Ovary (tissue), 10 donors: ENCODE measurements at regions of chr1 and their contacts with region 1.

Region 1: GRCh38 chr1:161305867-161306519 is 3.8 kb downstream of the MPZ start:
- DNase-seq: peak; percentile 74 to 85 (median 80)
- H3K4me3 ChIP-seq: peak overlapping the region; percentile 74
- H3K27ac ChIP-seq: no peak overlapping the region
- H3K4me1 ChIP-seq: peaks cover 8% of the 10 kb centered on the region
- H3K27me3 ChIP-seq: no peaks in the 10 kb centered on the region
- CTCF ChIP-seq: no peak
- EP300 ChIP-seq: no peak
- POLR2A ChIP-seq: no peak

Region 2: DNA sequence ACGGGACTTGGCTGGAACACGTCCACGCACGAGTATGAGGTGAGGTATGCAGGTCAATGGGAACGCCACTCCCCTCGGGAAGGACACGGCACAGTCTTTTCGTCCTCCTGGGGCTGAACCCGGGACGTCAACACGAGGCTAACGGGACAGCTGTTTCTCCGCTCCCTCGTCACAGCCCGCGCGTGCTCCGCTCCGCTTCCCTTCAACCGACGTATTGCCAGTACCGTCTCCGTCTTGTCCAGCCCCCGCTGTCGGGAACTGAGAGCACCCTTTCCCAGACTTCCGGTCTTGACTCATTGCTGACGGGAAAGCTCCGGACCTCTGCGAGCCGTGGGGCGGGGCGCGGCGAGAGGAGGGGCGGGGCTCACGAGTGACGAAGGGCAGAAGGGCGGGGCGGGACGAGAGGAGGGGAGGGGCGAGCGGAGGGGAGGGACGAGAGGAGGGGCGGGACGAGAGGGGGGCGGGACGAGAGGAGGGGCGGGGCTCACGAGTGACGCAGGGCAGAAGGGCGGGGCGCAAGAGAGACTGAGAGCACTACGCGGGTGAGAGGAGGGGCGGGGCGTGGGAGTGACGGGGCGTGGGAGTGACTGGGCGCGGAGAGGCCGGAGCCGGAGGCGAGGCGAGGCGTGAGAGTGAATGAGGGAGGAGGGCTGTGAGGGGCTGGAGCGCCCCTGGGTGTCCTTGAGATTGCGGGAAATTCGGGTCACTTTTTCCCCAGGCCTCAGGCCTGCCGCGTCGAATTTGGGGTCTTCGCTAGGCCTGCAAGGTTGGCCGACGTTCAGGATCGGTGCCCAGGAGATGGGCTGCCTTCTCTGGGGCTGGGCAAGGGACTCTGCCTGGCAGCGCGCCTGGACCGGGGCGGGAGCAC is 83.9 kb after region 1 on chr1:
- intact Hi-C with region 1: loop called in 1 of 4 experiments (anchors 10 kb)
- DNase-seq: peak; percentile 98 to 99 (median 99)
- H3K4me3 ChIP-seq: peak overlapping the region; percentile 77
- H3K27ac ChIP-seq: peak overlapping the region; percentile 63 to 82
- H3K4me1 ChIP-seq: no peaks in the 10 kb centered on the region
- H3K27me3 ChIP-seq: no peaks in the 10 kb centered on the region
- CTCF ChIP-seq: no peak
- EP300 ChIP-seq: peak; percentile 100
- POLR2A ChIP-seq: peak; percentile 99